ENCODE measurements at regions of chr5 and their contacts with region 1.

Region 1: DNA sequence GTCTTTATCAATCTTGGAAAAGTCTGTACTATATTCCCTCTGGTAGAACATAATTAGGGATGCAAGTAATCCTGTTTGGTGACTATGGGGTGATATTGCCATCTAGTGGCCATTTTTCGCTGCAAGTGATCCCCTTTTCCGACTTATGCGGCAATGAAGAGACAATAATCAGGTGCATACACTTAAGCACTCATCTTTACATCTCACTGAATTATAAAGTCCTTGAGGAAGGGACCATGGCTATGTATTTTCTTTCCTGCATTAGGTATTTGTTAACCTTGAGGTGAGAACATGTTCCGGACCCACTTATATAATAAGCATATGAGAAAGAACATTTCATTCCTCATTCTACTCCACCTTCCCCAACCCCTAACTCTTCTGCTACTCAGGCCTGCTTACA is 19.6 kb upstream of the LIX1 start:
- DNase-seq: peak; percentile 22
- CTCF ChIP-seq: peak; percentile 80

Region 2: DNA sequence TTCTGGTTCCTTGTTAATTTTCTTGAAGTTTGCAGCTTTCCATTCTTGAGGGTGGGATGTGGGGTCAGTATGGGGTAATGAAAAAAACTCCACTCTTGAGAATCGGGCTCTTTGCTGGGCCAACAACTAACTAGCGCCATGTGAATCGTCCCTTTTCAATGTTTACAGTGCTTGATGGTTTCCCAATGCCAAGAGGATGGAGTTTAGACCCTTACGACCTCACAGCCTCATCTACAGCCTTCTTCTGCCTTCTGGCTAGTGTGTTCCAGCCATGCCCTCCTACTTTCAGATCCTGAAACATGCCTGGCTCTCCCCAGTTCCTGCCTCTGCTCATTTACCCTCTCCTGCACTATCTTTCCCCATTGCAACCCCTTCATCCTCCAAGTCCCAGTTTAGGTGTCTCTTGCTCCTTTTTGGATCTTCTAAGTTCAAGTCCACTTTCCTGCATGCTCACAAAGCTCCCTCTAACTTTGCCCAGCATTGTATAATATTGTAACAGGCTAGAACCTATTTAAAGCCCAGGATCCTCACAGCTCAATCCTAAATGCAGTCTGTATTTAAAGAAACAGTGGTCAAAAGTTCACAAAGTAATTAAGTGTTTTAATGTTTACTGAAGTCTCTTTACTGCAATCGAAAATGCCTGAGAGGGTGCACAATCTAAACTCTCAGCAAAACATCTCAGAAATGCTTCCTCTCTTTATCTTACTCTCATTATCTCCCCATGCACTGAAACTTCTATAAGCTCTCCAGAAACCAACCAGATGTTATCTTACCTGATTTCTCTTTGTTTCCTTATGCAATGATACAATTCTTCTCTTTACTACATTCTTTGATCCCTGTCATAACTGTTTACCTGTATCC is 520.4 kb before region 1 on chr5:
- in situ Hi-C with region 1: no loop called
- DNase-seq: no peak
- CTCF ChIP-seq: no peak

Region 3: DNA sequence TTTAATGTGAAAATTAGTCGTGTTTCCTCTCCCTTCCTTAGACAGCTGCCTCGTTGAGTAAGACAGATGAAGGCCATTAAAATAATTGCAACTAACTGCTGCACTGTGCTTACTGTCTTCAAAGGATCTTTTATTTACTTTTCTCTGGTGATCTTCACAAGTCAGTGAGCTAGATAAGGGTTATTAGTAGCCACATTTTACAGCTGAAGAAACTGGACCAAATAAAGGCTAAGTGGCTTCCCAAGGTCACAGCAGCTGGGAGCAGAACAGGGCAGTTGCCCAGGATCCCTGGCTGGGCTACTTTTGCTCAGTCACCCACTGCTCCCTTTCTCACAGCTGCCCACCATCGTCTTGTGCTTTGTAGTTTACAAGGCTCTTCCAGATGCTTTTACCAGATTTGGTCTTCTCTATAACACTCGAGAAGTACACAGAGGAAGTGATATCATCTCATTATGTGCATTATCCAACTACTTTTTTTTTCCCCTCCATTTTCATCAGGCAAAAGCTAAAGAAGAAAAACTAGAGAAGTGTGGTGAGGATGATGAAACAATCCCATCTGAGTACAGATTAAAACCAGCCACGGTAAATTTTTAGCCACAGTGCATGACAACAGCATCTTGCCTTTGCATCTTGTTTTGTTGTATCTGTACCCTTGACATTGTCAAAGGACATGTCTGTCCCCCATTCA is 416.1 kb before region 1 on chr5:
- in situ Hi-C with region 1: loop called (anchors 5 kb)
- DNase-seq: no peak
- CTCF ChIP-seq: no peak

Region 4: GRCh38 chr5:97629276-97629675 is 467.2 kb after region 1 on chr5:
- in situ Hi-C with region 1: no loop called
- DNase-seq: no peak
- CTCF ChIP-seq: no peak

Measured in GM13976 (cell line).